ENCODE measurements at regions of chr7 and their contacts with region 1.

Region 1: DNA sequence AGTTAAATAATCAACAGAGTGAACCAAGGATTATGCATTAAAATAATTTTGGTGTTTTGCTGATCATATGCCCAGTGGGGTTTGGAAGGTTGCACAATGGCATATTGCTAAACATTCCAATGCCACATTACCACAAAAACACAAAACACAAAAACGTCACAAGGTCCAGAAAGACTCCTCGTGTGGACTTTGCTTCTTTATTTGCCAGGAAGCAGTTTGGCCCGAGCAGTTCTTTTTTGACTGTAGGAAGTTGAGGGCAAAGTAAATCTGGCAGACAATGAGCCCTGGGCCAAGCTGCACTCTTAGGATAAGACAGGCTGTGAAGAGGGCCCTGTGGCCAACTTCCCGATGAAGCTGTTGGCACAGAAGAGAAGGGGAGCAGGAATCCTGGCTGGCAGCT is 39.2 kb upstream of the SLC35B4 start:
- DNase-seq: no peak
- ATAC-seq: no peak
- H3K4me3 Mint-ChIP-seq: no peak overlapping the region
- H3K27ac Mint-ChIP-seq: no peak overlapping the region
- H3K4me1 Mint-ChIP-seq: peaks cover 10% of the 10 kb centered on the region
- H3K27me3 Mint-ChIP-seq: peaks cover 6% of the 10 kb centered on the region

Region 2: DNA sequence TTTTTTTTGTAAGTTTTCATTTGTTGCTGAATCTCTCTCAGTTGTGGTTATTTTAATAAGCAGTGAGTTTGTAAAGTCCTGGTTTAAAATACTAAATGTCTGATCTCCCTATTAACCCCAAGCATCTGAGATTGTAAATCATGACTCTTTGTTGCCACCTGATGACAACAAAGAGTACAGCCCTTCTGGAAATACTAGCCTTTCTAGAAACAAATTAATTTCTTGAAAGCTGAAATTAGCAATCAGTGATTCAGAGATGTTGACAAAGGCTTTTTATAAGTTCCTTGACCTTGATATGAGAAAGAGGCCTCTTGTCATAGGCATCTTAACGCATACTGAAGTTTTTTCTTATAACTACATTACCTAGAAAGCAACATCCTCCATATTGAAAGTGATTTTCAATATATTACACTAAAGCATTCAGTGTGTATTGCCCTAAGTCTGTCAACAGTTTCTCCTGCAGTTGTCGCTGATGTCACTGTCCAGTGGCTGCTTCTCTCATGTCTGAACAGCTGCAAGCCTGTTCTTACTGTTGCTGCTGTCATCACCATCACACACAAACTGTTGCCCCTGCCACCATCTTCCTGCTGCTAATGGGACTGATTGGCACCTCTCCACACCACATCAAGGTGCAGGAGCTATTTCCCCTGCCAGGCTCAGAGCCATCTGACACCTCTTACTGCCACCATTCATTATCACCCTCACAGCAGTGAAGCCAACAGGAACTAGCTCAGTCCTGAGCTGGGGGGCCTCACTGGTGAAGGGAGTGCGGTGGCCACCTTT is 323.9 kb before region 1 on chr7:
- CTCF ChIA-PET with region 1: no interaction called
- POLR2A ChIA-PET with region 1: no interaction called
- intact Hi-C with region 1: no loop called
- DNase-seq: peak; percentile 8
- ATAC-seq: peak; percentile 39
- H3K4me3 Mint-ChIP-seq: no peak overlapping the region
- H3K27ac Mint-ChIP-seq: no peak overlapping the region
- H3K4me1 Mint-ChIP-seq: peaks cover 3% of the 10 kb centered on the region
- H3K27me3 Mint-ChIP-seq: no peaks in the 10 kb centered on the region

Region 3: GRCh38 chr7:134374291-134374690 is 18.4 kb after region 1 on chr7:
- CTCF ChIA-PET with region 1: interaction called, 13 read pairs
- POLR2A ChIA-PET with region 1: no interaction called
- intact Hi-C with region 1: no loop called
- DNase-seq: no peak
- ATAC-seq: no peak
- H3K4me3 Mint-ChIP-seq: no peak overlapping the region
- H3K27ac Mint-ChIP-seq: no peak overlapping the region
- H3K4me1 Mint-ChIP-seq: no peaks in the 10 kb centered on the region
- H3K27me3 Mint-ChIP-seq: peaks cover 13% of the 10 kb centered on the region

Region 4: DNA sequence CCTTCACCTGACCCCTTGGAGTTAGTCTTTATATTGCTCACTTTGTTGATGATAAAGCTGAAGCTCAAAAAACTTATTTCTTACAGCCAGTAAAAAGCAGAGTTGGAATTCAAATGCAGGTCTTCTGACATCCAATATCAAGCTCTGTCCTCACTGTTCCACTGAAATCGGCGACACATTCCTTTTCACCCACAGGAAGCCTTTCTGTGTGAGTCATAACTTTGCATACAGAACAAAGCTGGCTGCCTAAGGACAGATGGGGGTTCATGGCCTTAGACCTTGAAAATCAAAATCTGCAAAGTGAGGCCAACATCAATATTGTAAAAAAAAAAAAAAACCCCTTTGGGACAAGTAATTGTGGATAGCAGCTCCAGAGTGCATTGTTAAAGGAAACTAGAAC is 124.8 kb after region 1 on chr7:
- CTCF ChIA-PET with region 1: no interaction called
- POLR2A ChIA-PET with region 1: no interaction called
- intact Hi-C with region 1: no loop called
- DNase-seq: no peak
- ATAC-seq: no peak
- H3K4me3 Mint-ChIP-seq: no peak overlapping the region
- H3K27ac Mint-ChIP-seq: no peak overlapping the region
- H3K4me1 Mint-ChIP-seq: no peaks in the 10 kb centered on the region
- H3K27me3 Mint-ChIP-seq: peaks cover 9% of the 10 kb centered on the region

Measured in activated CD4-positive, alpha-beta T cell treated with anti-CD3 and anti-CD28 coated beads for 36 hours (primary cell).